ENCODE measurements at regions of chr4 and their contacts with region 1.

Region 1: GRCh38 chr4:373062-373839 is 35.6 kb downstream of the ZNF141 start:
- DNase-seq: no peak
- ATAC-seq: no peak
- H3K4me3 ChIP-seq: no peak overlapping the region
- H3K27ac ChIP-seq: no peak overlapping the region
- H3K4me1 ChIP-seq: no peaks in the 10 kb centered on the region
- H3K27me3 ChIP-seq: no peaks in the 10 kb centered on the region
- CTCF ChIP-seq: no peak

Region 2: DNA sequence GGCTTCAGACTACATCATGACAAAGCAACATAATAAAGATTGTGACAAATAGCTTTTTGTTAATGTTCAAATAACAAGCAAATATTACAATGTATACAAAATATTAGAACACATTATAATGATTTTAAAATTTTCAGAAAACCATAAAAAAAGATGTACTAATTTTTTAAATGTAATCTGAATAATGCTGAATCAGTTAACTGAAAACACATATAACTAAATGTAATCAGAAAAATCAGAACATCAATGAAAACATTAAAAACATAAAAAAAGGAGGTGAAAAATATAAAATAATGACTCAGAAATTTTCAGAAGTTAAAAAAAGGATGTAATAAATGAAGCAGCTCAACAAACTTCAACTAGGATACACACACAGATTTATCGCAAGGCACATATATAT is 72.2 kb after region 1 on chr4:
- intact Hi-C with region 1: loop called in 4 of 10 experiments (anchors 5 to 10 kb)
- DNase-seq: no peak
- ATAC-seq: no peak
- H3K4me3 ChIP-seq: no peak overlapping the region
- H3K27ac ChIP-seq: no peak overlapping the region
- H3K4me1 ChIP-seq: no peaks in the 10 kb centered on the region
- H3K27me3 ChIP-seq: no peaks in the 10 kb centered on the region
- CTCF ChIP-seq: no peak

Region 3: DNA sequence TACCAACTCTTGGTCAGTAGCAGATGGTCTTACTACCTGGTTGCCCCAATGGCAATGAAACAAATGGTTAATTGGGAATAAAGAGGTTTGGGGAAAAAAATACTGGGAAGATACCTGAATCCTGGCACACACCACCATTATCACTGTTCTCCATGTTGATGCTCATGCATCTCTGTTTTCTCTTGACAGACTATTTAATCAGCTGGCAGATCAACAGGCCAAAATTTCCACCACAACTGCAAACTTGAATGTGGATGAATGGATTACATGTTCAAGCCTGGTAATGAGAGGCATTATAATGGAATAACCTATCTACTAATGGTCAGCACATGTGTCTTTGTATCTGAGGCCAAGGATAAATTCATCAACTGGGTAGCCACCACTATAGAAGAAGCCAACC is 80.0 kb after region 1 on chr4:
- intact Hi-C with region 1: loop called in 3 of 10 experiments (anchors 10 kb)
- DNase-seq: no peak
- ATAC-seq: no peak
- H3K4me3 ChIP-seq: no peak overlapping the region
- H3K27ac ChIP-seq: no peak overlapping the region
- H3K4me1 ChIP-seq: no peaks in the 10 kb centered on the region
- H3K27me3 ChIP-seq: no peaks in the 10 kb centered on the region
- CTCF ChIP-seq: no peak